ENCODE measurements at regions of chr1 and their contacts with region 1.

Region 1: GRCh38 chr1:225881969-225882693 is at the start of gene TMEM63A:
- DNase-seq: peak; percentile 75 to 96
- H3K4me3 ChIP-seq: peak within 1 kb of the TSS; percentile 53 to 92 (median 78)
- H3K27ac ChIP-seq: peak within 1 kb of the TSS; percentile 16; the same call in 1 of the 2 replicates
- H3K4me1 ChIP-seq: peaks cover 9 to 22% (median 16%) of the 10 kb centered on the region in 4 experiments
- H3K27me3 ChIP-seq: peaks cover 0 to 15% (median 7%) of the 10 kb centered on the region in 4 experiments; a peak in 4 of 7 replicates
- CTCF ChIP-seq: peak in 2 of 3 experiments; percentile 1 to 16; a peak in 1 of 4 replicates
- EP300 ChIP-seq: peak in 1 of 2 experiments; percentile 23; a peak in 1 of 3 replicates
- POLR2A ChIP-seq: peak in 1 of 2 experiments; percentile 71; a peak in 2 of 3 replicates
- RAD21 ChIP-seq: no peak; a peak in 1 of 4 replicates
- total RNA-seq, gene TMEM63A: 41.2 and 55.4 TPM in 2 replicates

Region 2: GRCh38 chr1:225474986-225475820 is 406.9 kb before region 1 on chr1:
- CTCF ChIA-PET with region 1: interaction called, 10 read pairs
- POLR2A ChIA-PET with region 1: no interaction called
- DNase-seq: peak in 1 of 2 experiments; percentile 96
- H3K4me3 ChIP-seq: no peak overlapping the region
- H3K27ac ChIP-seq: no peak overlapping the region
- H3K4me1 ChIP-seq: peaks cover 0 to 6% (median 1%) of the 10 kb centered on the region in 4 experiments; a peak in 4 of 7 replicates
- H3K27me3 ChIP-seq: no peaks in the 10 kb centered on the region
- CTCF ChIP-seq: peak; percentile 100
- EP300 ChIP-seq: no peak
- POLR2A ChIP-seq: no peak
- RAD21 ChIP-seq: peak; percentile 100

Region 3: DNA sequence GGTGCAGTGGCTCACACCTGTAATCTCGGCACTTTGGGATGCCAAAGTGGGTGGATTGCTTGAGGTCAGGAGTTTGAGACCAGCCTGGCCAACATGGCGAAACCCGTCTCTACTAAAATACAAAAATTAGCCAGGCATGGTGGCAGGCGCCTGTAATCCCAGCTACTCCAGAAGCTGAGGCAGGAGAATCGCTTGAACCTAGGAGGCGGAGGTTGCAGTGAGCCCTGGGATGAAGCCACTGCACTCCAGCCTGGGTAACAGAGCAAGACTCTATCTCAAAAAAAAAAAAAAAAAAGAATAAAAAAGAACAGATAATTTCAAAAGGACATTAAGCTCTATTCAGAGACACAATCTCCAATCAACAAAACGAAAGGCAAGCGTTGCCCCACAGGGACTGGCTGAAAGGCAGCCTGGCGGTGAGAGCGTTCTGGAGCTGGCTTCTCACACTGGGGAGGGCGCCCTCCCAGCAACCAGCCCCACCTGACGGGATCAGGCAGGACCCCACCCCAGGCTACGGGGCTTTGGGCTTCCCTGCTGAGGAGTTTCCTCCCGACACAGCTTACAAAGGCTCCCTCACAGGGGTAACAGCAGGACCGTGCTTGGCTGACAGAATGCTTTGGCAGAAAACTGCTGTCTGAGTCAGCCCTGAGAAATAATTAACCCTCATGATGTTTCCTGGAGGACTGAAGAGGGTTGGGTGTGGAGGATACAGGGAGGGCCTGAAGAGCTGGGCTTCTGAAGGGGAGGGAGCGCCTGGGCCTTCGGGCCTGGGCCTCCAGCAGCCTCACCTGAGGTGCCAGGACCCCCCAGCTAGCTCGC is 135.6 kb before region 1 on chr1:
- CTCF ChIA-PET with region 1: no interaction called
- POLR2A ChIA-PET with region 1: no interaction called
- DNase-seq: peak; percentile 77 to 82
- H3K4me3 ChIP-seq: peak overlapping the region in 3 of 4 experiments; percentile 2 to 33 (median 11); a peak in 3 of 8 replicates
- H3K27ac ChIP-seq: no peak overlapping the region
- H3K4me1 ChIP-seq: peaks cover 2 to 5% (median 3%) of the 10 kb centered on the region in 4 experiments; a peak in 4 of 7 replicates
- H3K27me3 ChIP-seq: 0 out of 7 replicates have a peak, but pooled peaks cover 0 to 4% (median 0%) of the 10 kb centered on the region in 4 experiments
- CTCF ChIP-seq: peak in 1 of 3 experiments; percentile 5; a peak in 1 of 4 replicates
- EP300 ChIP-seq: no peak
- POLR2A ChIP-seq: no peak
- RAD21 ChIP-seq: no peak; a peak in 1 of 4 replicates

Region 4: DNA sequence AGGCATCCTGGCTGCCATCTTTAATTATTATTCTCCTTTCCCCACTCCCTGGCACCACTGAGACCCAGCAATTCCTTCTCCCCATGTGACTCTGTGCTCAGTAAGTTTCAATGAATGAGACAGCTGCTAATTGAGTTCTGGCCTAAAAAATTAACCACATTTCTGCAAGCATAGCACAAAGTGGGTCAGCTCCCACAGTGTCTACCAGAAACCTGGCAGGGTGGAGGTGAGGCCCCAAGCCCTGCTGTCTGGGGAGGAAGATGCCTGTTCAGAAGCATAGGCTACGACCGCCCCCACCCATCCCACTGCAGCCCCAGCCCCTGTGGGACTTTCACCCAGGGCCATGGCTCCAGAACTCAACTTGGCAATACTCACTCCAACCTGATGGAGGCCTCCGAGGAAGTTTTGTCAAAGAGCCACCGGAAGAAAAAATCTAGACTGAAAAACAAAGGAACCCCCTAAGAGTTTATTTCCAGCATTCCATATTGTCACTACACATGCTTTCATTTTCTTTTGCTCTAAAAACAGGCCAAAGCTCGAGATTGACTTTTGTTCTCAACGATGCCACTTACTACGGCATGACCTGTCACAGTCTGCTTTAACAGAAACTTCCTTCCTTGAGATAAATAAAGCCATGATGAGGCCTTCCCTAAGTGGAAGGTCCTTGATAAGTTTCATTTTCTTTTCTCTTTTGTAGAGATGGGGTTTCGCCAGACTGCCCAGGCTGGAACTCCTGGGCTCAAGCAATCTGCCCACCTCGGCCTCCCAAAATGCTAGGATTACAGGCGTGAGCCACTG is 26.4 kb before region 1 on chr1:
- CTCF ChIA-PET with region 1: interaction called, 18 read pairs
- POLR2A ChIA-PET with region 1: interaction called, 10 read pairs
- DNase-seq: no peak
- H3K4me3 ChIP-seq: no peak overlapping the region
- H3K27ac ChIP-seq: no peak overlapping the region
- H3K4me1 ChIP-seq: no peaks in the 10 kb centered on the region; a peak in 2 of 7 replicates
- H3K27me3 ChIP-seq: no peaks in the 10 kb centered on the region
- CTCF ChIP-seq: no peak; a peak in 1 of 4 replicates
- EP300 ChIP-seq: no peak
- POLR2A ChIP-seq: no peak
- RAD21 ChIP-seq: peak in 1 of 2 experiments; percentile 29; a peak in 1 of 4 replicates

Region 5: DNA sequence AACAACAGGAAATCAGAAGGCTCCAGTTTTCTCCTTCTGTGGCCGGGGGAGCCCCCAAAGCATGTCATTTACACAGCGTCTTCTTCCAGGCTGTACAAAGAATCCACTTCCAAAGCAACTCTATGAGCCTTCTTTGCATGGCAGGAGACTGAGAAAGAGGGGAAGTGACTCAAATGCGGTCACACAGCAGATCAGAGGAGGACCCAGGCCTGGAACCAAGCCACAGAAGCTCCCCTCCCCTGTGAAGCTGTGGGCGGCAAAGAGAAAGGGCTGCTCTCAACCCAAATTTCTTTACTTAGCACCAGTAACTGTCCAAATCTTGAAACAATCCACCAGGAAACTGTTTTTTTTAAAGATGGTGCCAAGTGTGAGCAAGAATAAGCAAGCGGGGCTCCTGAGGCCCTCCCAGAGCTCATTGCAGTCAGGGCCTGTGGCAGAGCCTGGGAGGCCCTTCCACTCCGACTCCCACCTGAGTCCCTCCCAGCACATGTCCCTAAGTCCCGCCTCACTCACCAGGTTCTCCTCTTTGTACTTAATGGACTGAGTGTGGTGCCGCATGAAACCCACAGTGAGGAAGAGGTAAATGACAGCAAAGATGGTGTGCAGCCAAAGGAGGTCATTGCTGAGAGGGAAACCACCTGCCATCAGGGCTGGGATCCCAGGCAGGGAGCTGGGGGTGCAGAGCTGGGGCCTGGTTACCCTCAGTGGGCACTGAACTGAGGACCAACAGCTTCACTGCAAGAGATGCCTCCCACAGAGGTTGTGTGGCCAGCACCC is 15.9 kb before region 1 on chr1:
- CTCF ChIA-PET with region 1: interaction called, 12 read pairs
- POLR2A ChIA-PET with region 1: interaction called, 27 read pairs
- DNase-seq: no peak
- H3K4me3 ChIP-seq: no peak overlapping the region
- H3K27ac ChIP-seq: no peak overlapping the region; the same call in 1 of the 2 replicates
- H3K4me1 ChIP-seq: no peaks in the 10 kb centered on the region
- H3K27me3 ChIP-seq: no peaks in the 10 kb centered on the region
- CTCF ChIP-seq: no peak
- EP300 ChIP-seq: no peak
- POLR2A ChIP-seq: no peak
- RAD21 ChIP-seq: no peak

Region 6: GRCh38 chr1:225896937-225897549 is 14.9 kb after region 1 on chr1:
- CTCF ChIA-PET with region 1: interaction called, 406 read pairs
- POLR2A ChIA-PET with region 1: interaction called, 63 read pairs
- DNase-seq: no peak
- H3K4me3 ChIP-seq: no peak overlapping the region
- H3K27ac ChIP-seq: no peak overlapping the region
- H3K4me1 ChIP-seq: peaks cover 0 to 21% (median 19%) of the 10 kb centered on the region in 4 experiments; a peak in 6 of 7 replicates
- H3K27me3 ChIP-seq: no peaks in the 10 kb centered on the region
- CTCF ChIP-seq: no peak
- EP300 ChIP-seq: no peak
- POLR2A ChIP-seq: no peak
- RAD21 ChIP-seq: no peak

Region 7: DNA sequence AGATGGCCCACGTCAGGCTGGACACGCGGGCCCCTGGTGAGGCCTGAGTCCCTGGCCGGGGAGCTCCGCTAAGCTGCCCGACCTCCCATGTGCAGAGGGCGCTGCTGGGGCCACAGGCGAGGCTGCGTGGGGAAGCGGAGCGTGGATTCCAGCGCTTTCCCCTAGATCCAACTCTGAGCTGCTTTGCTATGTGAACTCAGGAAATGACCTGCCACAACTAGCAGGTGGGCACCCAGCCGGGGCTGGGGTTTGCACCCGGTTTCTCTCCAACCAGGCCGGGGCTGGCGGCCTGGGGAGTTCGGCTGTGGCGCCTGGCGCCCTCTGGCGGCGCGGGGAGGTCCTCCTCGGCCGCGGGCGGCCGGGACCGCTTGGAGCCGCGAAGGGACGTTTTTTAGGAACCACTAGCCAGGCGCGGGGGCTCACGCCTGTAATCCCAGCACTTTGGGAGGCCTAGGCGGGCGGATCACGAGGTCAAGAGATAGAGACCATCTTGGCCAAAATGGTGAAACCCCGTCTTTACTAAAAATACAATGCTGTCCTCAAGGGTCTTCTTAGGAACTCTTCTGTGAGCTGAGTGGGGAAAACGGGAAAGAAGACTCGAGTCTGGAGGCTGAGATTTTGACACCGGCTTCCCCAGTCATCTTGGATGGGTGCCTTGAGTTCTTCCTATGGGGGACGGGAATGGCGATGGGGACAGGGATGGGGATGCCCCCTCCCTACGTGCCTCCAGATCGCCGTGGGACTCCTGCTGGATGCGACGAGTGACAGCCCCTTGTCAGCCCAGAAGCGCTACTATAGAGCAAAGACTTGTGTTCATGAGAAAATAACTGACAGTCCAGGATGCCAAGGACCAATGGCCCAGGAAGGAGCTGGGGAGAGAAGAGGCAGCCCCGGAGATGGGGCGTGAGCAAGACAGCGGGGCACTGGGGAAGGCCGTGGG is 29.3 kb after region 1 on chr1:
- CTCF ChIA-PET with region 1: interaction called, 406 read pairs
- POLR2A ChIA-PET with region 1: interaction called, 41 read pairs
- DNase-seq: peak in 1 of 2 experiments; percentile 94
- H3K4me3 ChIP-seq: no peak overlapping the region
- H3K27ac ChIP-seq: no peak overlapping the region
- H3K4me1 ChIP-seq: peaks cover 0 to 7% (median 1%) of the 10 kb centered on the region in 4 experiments; a peak in 2 of 7 replicates
- H3K27me3 ChIP-seq: no peaks in the 10 kb centered on the region; a peak in 2 of 7 replicates
- CTCF ChIP-seq: peak; percentile 75 to 97 (median 77)
- EP300 ChIP-seq: no peak
- POLR2A ChIP-seq: no peak
- RAD21 ChIP-seq: peak; percentile 86 to 92